Activated CD4-positive, alpha-beta memory T cell treated with anti-CD3 and anti-CD28 coated beads, Interleukin-2, amount 10 ng/mL, durations not matched to agents 7 days and 5 days (primary cell): ENCODE measurements at regions of chr17 and their contacts with region 1.

Region 1: DNA sequence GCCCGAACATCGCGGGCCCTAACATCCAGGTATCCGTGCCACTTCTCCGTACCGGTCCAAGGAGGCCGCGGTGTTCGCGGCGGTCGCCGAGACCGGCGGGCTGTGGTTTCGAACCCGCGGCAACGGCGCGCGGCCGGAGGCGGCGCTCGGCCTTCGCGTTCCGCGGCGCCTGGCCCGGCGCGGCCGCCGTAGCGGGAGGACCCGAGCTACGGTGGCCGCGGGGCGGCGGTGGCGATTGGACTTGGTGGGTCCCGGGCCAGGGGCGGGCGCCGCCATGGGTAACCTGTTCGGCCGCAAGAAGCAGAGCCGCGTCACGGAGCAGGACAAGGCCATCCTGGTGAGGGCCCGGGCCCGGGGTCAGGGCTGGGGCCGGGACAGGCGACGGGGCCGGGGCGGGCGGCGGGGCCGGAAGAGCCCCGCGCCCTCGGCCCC is at the start of gene CHMP6:
- DNase-seq: peak; percentile 73
- H3K4me3 Mint-ChIP-seq: peak within 1 kb of the TSS; percentile 74
- H3K27ac Mint-ChIP-seq: peak within 1 kb of the TSS; percentile 58
- H3K4me1 Mint-ChIP-seq: peaks cover 26% of the 10 kb centered on the region
- H3K27me3 Mint-ChIP-seq: peaks cover 2% of the 10 kb centered on the region
- total RNA-seq, gene CHMP6: 30.3 to 31.6 TPM

Region 2: GRCh38 chr17:81002409-81003361 is 11.0 kb after region 1 on chr17:
- CTCF ChIA-PET with region 1: no interaction called
- POLR2A ChIA-PET with region 1: interaction called, 10 read pairs
- DNase-seq: no peak
- H3K4me3 Mint-ChIP-seq: peak overlapping the region; percentile 36
- H3K27ac Mint-ChIP-seq: peak overlapping the region; percentile 16
- H3K4me1 Mint-ChIP-seq: peaks cover 19% of the 10 kb centered on the region
- H3K27me3 Mint-ChIP-seq: peaks cover 41% of the 10 kb centered on the region